Posterior vena cava (tissue), 2 donors: ENCODE measurements at regions of chr17 and their contacts with region 1.

Region 1: DNA sequence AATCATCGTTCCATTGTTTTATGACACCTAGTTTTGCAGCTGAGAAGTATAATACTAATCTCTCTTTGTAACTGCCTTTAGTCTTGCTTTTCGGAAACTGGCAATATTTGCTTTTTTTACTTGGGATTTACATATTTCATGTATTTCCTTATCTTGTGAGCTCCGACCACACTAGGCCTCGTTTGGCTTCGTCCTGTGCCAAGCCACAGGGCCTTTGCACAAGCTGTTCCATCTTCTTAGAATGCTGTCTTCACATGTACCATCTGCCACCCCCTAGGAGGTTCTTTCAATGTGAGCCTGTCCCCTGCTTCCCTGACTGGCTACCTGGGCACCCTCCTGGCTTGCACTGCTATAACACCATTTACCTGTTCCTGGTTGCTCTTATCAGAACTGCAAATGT is 77.2 kb downstream of the SHISA6 start:
- DNase-seq: no peak

Region 2: GRCh38 chr17:11298401-11298800 is 19.8 kb before region 1 on chr17:
- intact Hi-C with region 1: loop called in 1 of 2 experiments (anchors 1 kb)
- DNase-seq: no peak